Activated T-helper 2 cell treated with anti-CD3 and anti-CD28 coated beads, Interferon-gamma antibody, Interleukin-2, Interleukin-4, amounts not matched to agents 10 μg/mL and 5 μg/mL and 100 μg/mL, durations not matched to agents 14 hours and 24 hours and 36 hours (primary cell): ENCODE measurements at regions of chr20 and their contacts with region 1.

Region 1: GRCh38 chr20:63864847-63865640 is at the start of gene TPD52L2:
- DNase-seq: peak; percentile 97
- H3K4me3 Mint-ChIP-seq: peak within 1 kb of the TSS; percentile 96
- H3K27ac Mint-ChIP-seq: peak within 1 kb of the TSS; percentile 91
- H3K4me1 Mint-ChIP-seq: peaks cover 22% of the 10 kb centered on the region
- H3K27me3 Mint-ChIP-seq: no peaks in the 10 kb centered on the region
- total RNA-seq, gene TPD52L2: 62.5 and 66.7 TPM in 2 replicates

Region 2: DNA sequence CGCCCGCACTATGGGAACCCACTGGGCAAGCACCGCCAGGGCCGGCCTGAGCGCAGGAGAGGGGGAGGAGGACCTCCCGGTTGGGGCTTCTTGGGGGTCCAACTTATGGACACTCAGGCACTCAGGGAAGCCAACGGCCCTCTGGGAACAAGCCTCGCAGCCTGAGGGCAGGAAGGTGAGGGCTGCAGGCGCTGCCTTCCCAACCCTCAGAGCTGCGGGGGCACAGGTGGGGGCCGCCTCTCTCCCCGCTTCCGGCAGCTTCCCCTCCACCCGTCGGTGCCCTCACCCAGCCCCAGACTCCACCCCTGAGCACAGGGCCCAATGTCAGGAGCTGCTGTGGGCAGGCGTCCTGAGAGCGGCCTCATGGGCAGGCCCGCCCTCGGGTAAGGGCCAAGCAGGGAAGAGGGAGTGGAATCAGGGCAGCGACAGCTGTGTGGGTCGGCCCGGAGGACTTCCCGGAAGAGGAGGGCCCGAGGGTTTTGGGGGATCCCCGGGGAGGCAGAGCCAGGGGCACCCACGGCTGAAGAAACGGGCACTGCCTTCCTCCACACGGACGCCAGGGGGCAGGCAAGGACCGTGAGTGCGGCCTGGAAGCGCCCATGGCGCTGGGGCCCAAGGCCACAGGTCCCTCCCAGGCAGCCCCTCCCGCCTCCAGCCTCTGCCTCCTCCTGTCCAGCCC is 327.4 kb before region 1 on chr20:
- intact Hi-C with region 1: loop called (anchors 2 kb)
- DNase-seq: peak; percentile 94
- H3K4me3 Mint-ChIP-seq: peak overlapping the region; percentile 69
- H3K27ac Mint-ChIP-seq: peak overlapping the region; percentile 87
- H3K4me1 Mint-ChIP-seq: peaks cover 5% of the 10 kb centered on the region
- H3K27me3 Mint-ChIP-seq: no peaks in the 10 kb centered on the region

Region 3: GRCh38 chr20:63707549-63708300 is 157.3 kb before region 1 on chr20 and contains the starts of genes ARFRP1 and ZGPAT:
- intact Hi-C with region 1: loop called (anchors 1 kb)
- DNase-seq: peak; percentile 87
- H3K4me3 Mint-ChIP-seq: peak within 1 kb of the TSS; percentile 87
- H3K27ac Mint-ChIP-seq: peak within 1 kb of the TSS; percentile 60
- H3K4me1 Mint-ChIP-seq: peaks cover 36% of the 10 kb centered on the region
- H3K27me3 Mint-ChIP-seq: no peaks in the 10 kb centered on the region
- total RNA-seq, gene ARFRP1: 59.0 and 59.1 TPM in 2 replicates
- total RNA-seq, gene ZGPAT: 29.0 and 36.1 TPM in 2 replicates

Region 4: DNA sequence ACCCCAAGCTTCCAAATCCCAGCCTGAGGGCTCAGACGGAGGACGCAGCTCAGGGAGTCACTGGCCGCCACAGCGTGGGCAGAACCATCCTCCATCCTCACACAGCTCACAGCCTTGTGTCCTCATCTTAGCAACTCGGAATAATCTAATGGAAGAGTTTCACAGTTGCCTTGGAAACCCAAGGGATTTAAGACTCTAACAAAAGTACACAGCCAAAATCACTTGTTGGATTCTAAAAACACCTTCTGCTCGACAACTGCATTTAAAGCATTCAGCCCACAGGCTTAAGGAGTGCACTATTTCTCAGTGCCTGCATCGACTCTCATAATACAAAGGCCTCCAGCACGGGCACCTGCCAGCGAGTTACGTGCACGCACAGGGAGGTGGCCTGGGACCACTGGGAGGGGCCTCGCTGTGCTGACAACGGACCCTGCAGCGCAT is 79.3 kb before region 1 on chr20:
- intact Hi-C with region 1: loop called (anchors 5 kb)
- DNase-seq: no peak
- H3K4me3 Mint-ChIP-seq: no peak overlapping the region
- H3K27ac Mint-ChIP-seq: no peak overlapping the region
- H3K4me1 Mint-ChIP-seq: peaks cover 5% of the 10 kb centered on the region
- H3K27me3 Mint-ChIP-seq: no peaks in the 10 kb centered on the region

Region 5: DNA sequence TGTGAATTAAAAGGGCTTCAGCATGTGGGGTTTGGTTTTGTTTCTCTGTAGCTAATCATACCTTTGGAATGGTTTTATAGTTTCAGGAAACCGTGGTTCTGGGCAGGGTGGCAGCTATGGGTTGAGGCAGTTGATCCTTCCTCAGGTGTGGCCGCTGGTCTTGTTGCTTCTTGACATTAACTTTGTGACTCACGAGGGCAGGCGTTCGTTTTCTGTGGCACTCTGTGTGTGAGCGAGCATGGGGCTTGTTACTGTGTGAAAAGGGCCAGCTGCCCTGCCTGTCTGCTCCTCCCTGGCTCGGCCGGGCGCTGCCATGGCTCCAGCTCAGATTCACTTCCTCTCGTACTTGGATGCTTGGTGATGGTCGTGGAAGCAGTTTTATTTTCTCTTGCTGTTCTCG is 46.1 kb after region 1 on chr20:
- intact Hi-C with region 1: no loop called
- DNase-seq: no peak
- H3K4me3 Mint-ChIP-seq: no peak overlapping the region
- H3K27ac Mint-ChIP-seq: peak overlapping the region; percentile 9
- H3K4me1 Mint-ChIP-seq: peaks cover 20% of the 10 kb centered on the region
- H3K27me3 Mint-ChIP-seq: no peaks in the 10 kb centered on the region

Region 6: DNA sequence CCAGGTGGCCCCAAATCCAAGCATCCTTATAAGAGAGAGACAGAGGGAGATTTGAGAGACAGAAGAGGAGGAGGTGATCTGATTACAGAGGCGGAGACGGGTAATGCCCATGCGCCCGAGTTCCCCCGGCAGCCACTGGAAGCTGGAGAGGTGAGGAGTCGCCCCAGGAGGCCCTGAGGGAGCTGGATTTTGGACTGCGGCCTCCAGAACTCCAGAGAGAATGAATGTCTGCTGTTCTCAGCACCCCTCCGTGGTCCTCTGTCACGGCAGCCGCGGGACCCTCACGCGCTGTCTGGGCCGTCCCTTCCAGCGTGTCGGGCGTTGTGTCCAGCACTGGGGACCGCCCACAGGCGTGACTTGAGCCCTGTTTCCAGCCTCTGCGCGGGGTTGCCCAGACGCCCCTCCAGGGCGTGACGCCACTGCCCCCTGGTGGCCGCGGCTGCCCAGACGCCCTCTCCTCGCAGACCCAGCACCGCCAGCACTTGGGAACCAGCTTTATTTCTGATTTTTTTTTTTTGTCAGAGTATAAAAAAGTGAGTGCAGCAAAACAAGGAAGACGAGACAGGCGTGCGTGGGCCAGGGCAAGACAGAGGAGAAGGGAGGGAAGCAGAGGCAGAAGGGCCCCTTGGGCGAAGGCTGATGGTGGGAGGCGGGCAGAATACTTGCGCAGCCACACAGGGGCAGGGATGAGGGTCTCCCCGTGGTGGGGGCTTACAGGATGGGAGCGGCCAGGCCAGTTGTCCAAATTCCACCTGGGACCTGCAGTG is 108.8 kb after region 1 on chr20:
- intact Hi-C with region 1: loop called (anchors 10 kb)
- DNase-seq: peak; percentile 66
- H3K4me3 Mint-ChIP-seq: no peak overlapping the region
- H3K27ac Mint-ChIP-seq: no peak overlapping the region
- H3K4me1 Mint-ChIP-seq: peaks cover 36% of the 10 kb centered on the region
- H3K27me3 Mint-ChIP-seq: no peaks in the 10 kb centered on the region